GM23248 (cell line): ENCODE measurements at regions of chr17 and their contacts with region 1.

Region 1: DNA sequence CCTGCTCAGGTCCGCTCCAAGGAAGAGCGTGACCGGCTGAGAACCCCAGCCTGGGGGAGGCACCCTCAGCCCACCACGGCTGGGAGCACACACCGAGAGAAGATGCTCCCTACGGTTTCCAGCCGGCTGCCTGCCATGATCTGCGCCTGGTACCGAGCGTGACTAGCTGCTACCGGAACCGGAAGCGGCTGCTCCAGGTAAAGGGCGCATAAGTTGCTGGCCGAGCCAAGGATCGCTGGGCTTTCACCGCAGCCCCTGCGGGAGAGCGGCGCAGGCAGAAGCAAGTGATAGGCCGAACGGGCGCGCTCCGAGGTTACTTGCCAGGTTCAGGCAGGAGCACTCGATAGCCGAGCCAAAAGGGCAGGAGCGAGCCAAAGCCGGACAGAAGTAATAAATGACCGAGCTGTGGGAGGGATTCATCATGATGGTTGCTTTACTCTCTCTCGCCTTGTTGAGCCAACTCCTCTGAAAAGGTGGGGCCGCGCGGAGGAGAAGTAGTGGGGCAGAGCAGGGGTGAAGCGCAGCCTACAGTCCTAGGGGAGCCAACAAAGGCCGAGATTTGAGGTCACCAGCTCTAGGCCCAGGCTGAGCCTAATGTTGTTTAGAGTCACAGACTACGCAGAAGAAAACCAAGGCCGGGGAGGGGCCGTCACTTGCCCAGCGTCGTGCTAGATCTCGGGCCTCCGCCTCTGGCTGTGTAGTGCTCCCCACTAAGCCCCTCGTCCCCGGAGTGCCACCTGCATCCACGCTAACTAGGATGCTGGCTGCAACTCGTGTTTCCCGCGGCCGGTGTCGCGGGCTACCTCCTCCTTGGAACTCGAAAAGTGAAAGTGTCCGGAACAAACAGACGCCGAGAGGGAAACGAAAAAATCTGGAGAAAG is at the start of gene MRPS23:
- DNase-seq: peak; percentile 100
- H3K4me3 ChIP-seq: peak within 1 kb of the TSS; percentile 99
- H3K27ac ChIP-seq: peak within 1 kb of the TSS; percentile 83
- H3K4me1 ChIP-seq: peaks cover 14% of the 10 kb centered on the region
- H3K27me3 ChIP-seq: no peaks in the 10 kb centered on the region
- total RNA-seq, gene MRPS23: 24.8 and 33.4 TPM in 2 replicates

Region 2: GRCh38 chr17:57995076-57995956 is 145.2 kb after region 1 on chr17:
- in situ Hi-C with region 1: loop called (anchors 5 kb)
- DNase-seq: peak; percentile 90
- H3K4me3 ChIP-seq: no peak overlapping the region
- H3K27ac ChIP-seq: peak overlapping the region; percentile 23; the same call in 1 of the 2 replicates
- H3K4me1 ChIP-seq: peaks cover 11% of the 10 kb centered on the region; the same call in 1 of the 2 replicates
- H3K27me3 ChIP-seq: no peaks in the 10 kb centered on the region